Activated CD8-positive, alpha-beta T cell treated with anti-CD3 and anti-CD28 coated beads, Interleukin-2, amount 10 ng/mL, durations not matched to agents 7 days and 5 days (primary cell): ENCODE measurements at regions of chr9 and their contacts with region 1.

Region 1: GRCh38 chr9:91164724-91165520 is 196.8 kb downstream of the AUH start:
- DNase-seq: peak; percentile 91
- ATAC-seq: peak; percentile 86
- H3K4me3 Mint-ChIP-seq: peak overlapping the region; percentile 80
- H3K27ac Mint-ChIP-seq: peak overlapping the region; percentile 96
- H3K4me1 Mint-ChIP-seq: peaks cover 67% of the 10 kb centered on the region
- H3K27me3 Mint-ChIP-seq: no peaks in the 10 kb centered on the region

Region 2: GRCh38 chr9:90898228-90898627 is 266.7 kb before region 1 on chr9:
- CTCF ChIA-PET with region 1: no interaction called
- POLR2A ChIA-PET with region 1: no interaction called
- DNase-seq: no peak
- ATAC-seq: no peak
- H3K4me3 Mint-ChIP-seq: no peak overlapping the region
- H3K27ac Mint-ChIP-seq: no peak overlapping the region
- H3K4me1 Mint-ChIP-seq: no peaks in the 10 kb centered on the region
- H3K27me3 Mint-ChIP-seq: no peaks in the 10 kb centered on the region

Region 3: DNA sequence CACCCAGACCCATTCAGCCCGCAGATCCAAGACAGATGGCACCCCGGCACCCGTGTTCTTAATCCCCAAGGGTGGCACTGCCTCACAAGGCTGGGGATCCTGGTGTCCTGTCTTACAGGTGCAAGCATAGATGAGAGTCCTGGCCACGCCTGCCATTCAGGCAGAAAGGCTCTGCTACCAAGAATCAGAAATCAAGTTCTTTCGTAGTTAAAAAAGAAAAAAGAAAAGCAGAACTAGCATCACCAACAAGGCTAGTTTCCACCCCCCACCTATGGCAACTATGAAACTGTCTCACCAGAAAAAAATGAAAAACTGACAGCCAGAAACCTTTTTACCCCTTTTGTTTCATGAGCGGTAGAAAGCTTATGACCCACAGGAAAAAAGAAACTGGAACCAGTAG is 192.9 kb before region 1 on chr9:
- CTCF ChIA-PET with region 1: no interaction called
- POLR2A ChIA-PET with region 1: no interaction called
- DNase-seq: no peak
- ATAC-seq: no peak
- H3K4me3 Mint-ChIP-seq: no peak overlapping the region
- H3K27ac Mint-ChIP-seq: no peak overlapping the region
- H3K4me1 Mint-ChIP-seq: no peaks in the 10 kb centered on the region
- H3K27me3 Mint-ChIP-seq: no peaks in the 10 kb centered on the region

Region 4: DNA sequence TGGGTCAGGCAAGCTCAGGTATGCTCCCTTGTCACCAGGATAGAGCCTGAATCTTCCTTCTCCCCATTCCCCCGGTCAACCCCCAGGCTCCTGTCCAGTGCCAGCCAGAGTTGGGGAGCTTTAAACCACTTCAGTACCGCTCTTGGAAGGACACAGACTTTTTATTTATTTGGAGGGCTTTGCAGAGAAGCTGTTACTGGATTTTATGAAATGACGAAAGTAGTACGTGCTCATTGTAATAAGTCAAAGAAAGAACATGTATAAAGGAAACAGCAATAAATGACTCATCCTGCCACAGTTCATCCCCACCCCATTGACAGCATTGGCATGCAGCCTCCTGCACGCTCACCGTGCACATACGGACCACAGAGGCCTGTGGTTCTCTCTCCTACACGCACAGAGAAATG is 33.5 kb before region 1 on chr9:
- CTCF ChIA-PET with region 1: interaction called, 3 read pairs
- POLR2A ChIA-PET with region 1: interaction called, 12 read pairs
- DNase-seq: peak; percentile 89
- ATAC-seq: peak; percentile 100
- H3K4me3 Mint-ChIP-seq: peak overlapping the region; percentile 26
- H3K27ac Mint-ChIP-seq: peak overlapping the region; percentile 88
- H3K4me1 Mint-ChIP-seq: peaks cover 44% of the 10 kb centered on the region
- H3K27me3 Mint-ChIP-seq: no peaks in the 10 kb centered on the region

Region 5: DNA sequence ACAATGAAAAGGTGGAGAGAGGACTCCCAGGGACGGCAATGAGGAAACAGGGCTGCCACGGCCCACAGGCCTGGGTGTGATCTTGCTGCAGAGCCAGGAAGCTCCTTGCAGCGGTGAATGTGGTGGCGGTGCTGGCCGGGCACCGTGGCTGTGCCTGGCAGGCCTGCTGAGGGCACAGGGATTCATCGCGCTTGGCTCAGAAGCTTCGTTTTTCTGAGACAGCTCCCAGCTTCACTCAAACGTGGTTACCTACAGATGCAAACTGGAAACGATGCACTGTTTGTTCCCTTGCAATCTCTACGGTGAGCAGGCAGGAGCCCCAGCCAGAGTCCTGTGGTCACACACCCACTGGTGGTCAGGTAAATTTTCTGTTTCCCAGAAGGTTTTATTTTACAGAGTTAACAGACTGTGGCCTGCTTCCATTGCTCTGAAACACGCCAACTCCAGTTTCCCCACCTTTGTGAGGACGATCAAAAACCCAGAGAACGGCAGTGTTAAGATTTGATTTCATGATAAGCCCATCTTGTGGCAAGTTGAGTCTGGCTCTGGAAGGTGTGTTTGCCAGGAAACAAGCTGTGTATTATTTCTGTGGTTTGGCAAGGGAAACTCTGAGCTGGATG is 12.8 kb after region 1 on chr9:
- CTCF ChIA-PET with region 1: interaction called, 36 read pairs
- POLR2A ChIA-PET with region 1: interaction called, 17 read pairs
- DNase-seq: peak; percentile 61
- ATAC-seq: peak; percentile 59
- H3K4me3 Mint-ChIP-seq: peak overlapping the region; percentile 55
- H3K27ac Mint-ChIP-seq: peak overlapping the region; percentile 94
- H3K4me1 Mint-ChIP-seq: peaks cover 61% of the 10 kb centered on the region
- H3K27me3 Mint-ChIP-seq: no peaks in the 10 kb centered on the region

Region 6: DNA sequence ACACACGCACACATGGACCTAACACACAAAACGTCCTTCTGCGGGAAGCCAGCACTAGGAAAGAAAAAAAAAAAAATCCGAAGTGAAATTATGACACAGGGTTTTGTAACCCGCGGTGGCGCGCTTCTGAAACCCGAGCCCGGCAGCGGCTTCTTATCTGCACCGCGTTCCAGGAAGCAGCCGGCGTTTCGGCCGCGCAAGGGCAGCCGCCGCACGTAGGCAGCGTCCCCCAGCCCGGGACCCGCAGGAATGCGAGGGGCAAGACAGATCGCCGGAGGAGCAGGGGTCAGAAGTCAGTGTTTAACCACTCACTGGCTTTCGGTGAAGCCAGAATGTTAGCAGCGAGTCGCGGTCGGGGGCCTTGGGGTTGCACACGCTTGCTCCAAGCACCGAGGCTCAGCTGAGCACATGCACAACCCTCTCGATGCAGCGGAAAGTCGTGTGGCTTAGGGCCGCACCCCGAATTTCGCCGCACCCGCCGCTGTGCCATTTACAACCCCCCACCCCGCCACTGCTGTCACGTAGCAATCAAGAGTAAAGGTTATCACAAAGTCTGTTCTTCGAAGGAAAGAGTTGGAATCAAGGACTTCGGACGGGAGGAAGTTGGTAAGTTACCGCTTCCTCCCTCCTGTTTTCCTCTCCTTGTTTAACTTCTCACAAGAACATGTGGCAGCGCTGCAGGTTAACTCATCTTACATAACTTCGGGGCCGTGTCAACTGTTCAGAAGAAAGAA is 28.9 kb after region 1 on chr9:
- CTCF ChIA-PET with region 1: interaction called, 22 read pairs
- POLR2A ChIA-PET with region 1: interaction called, 17 read pairs
- DNase-seq: peak; percentile 93
- ATAC-seq: peak; percentile 79
- H3K4me3 Mint-ChIP-seq: peak overlapping the region; percentile 70
- H3K27ac Mint-ChIP-seq: peak overlapping the region; percentile 95
- H3K4me1 Mint-ChIP-seq: peaks cover 85% of the 10 kb centered on the region
- H3K27me3 Mint-ChIP-seq: no peaks in the 10 kb centered on the region

Region 7: DNA sequence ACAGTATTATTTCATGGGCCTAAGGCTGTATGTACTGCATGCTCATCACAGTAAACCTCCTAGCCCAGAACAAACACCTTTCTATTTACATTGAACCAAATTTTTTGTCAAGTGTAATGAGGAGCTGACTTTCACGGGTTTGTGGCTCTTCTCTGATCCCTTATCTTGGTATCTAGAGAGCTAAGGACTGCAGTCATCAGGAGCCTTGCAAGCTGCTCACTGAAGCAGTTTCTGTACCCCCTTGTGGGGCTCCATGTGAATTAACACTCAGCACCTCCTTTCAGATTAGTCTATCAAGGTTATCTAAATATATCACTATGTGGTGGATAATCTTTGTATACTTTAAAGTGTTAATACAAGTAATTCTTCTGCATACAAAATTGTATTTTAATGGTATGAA is 88.6 kb after region 1 on chr9:
- CTCF ChIA-PET with region 1: interaction called, 10 read pairs
- POLR2A ChIA-PET with region 1: interaction called, 6 read pairs
- DNase-seq: peak; percentile 74
- ATAC-seq: peak; percentile 99
- H3K4me3 Mint-ChIP-seq: no peak overlapping the region
- H3K27ac Mint-ChIP-seq: no peak overlapping the region
- H3K4me1 Mint-ChIP-seq: peaks cover 48% of the 10 kb centered on the region
- H3K27me3 Mint-ChIP-seq: no peaks in the 10 kb centered on the region